Right ventricle myocardium inferior (tissue), 1 donor: ENCODE measurements at regions of chr2 and their contacts with region 1.

Region 1: DNA sequence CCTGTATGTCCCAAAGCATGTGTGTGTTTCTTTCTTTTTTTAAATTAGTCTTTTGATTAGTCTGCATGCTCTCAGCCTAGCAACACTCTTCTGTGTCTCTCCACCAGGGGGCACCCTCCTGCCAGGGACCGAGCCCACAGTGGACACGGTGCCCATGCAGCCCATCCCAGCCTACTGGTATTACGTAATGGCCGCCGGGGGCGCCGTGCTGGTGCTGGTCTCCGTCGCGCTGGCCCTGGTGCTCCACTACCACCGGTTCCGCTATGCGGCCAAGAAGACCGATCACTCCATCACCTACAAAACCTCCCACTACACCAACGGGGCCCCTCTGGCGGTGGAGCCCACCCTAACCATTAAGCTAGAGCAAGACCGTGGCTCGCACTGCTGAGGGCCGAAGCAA is 93.8 kb downstream of the NRP2 start:
- DNase-seq: peak; percentile 71
- ATAC-seq: peak; percentile 68

Region 2: GRCh38 chr2:204129591-204130294 is 1646.4 kb before region 1 on chr2:
- intact Hi-C with region 1: loop called (anchors 10 kb)
- DNase-seq: peak; percentile 68
- ATAC-seq: peak; percentile 91

Region 3: DNA sequence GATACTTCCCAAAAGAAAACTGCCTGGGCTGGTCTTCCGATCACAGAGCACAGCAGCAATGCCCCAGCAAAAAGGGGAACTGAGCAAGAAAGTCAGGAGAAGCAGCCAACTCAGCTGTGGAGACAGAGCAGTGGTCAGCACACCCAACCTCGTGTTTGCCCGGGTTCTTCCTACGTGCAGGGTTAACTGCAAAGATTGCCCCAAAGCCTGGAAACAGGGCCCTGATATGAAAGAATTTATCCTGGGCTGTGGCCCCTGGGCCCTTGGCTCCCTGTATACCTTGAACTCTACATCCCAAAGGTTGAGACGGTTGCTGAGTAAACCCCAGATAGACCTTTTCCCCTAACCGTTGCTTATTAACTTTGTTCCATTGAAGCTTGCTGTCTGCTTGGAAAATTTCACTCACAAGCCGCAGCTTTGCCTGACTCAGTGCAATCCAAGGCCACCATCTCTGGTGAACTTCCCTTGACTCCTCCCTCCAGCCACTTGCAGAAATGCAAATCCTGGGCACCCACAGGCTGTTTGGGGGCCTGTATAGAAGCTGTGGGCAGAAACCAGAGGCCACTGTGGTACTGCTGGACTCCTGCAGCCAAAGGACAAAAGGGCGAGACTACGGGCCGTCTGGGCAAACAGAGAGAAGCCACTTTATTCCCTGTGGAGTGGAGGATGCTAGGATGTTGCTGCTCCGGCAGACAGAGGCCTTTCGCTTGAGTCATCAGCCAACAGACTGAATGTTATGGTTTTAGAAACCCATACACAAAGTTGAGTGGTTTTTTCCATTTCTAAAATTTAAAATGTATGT is 75.6 kb before region 1 on chr2:
- intact Hi-C with region 1: no loop called
- DNase-seq: no peak
- ATAC-seq: peak; percentile 59

Region 4: GRCh38 chr2:205885492-205886099 is 109.5 kb after region 1 on chr2:
- intact Hi-C with region 1: loop called (anchors 1 kb)
- DNase-seq: peak; percentile 88
- ATAC-seq: peak; percentile 88